Heart left ventricle (tissue), 16 donors: ENCODE measurements at regions of chr11 and their contacts with region 1.

Region 1: GRCh38 chr11:78350646-78351165 is 66.9 kb downstream of the GAB2 start:
- DNase-seq: peak in 4 of 5 donors; percentile 35 to 70 (median 45)
- ATAC-seq: peak; percentile 60 to 81 (median 73)
- H3K4me3 ChIP-seq: peak overlapping the region in 9 of 12 donors; percentile 15 to 43 (median 30)
- H3K27ac ChIP-seq: peak overlapping the region; percentile 64 to 96 (median 80)
- H3K4me1 ChIP-seq: peaks cover 0 to 94% (median 73%) of the 10 kb centered on the region in 12 donors
- H3K27me3 ChIP-seq: no peaks in the 10 kb centered on the region
- CTCF ChIP-seq: peak in 2 of 12 donors; percentile 24 to 26
- POLR2A ChIP-seq: no peak

Region 2: GRCh38 chr11:78112582-78113275 is 238.0 kb before region 1 on chr11:
- intact Hi-C with region 1: no loop called
- DNase-seq: no peak
- ATAC-seq: no peak
- H3K4me3 ChIP-seq: no peak overlapping the region
- H3K27ac ChIP-seq: no peak overlapping the region
- H3K4me1 ChIP-seq: no peaks in the 10 kb centered on the region
- H3K27me3 ChIP-seq: no peaks in the 10 kb centered on the region
- CTCF ChIP-seq: no peak
- POLR2A ChIP-seq: no peak

Region 3: GRCh38 chr11:78244546-78245255 is 106.0 kb before region 1 on chr11:
- intact Hi-C with region 1: loop called in 1 of 10 experiments (anchors 10 kb)
- DNase-seq: no peak
- ATAC-seq: peak in 2 of 4 donors; percentile 22 to 35
- H3K4me3 ChIP-seq: no peak overlapping the region
- H3K27ac ChIP-seq: peak overlapping the region in 8 of 12 donors; percentile 3 to 66 (median 28)
- H3K4me1 ChIP-seq: peaks cover 0 to 19% (median 6%) of the 10 kb centered on the region in 12 donors
- H3K27me3 ChIP-seq: no peaks in the 10 kb centered on the region
- CTCF ChIP-seq: no peak
- POLR2A ChIP-seq: no peak

Region 4: GRCh38 chr11:78310500-78310909 is 40.2 kb before region 1 on chr11:
- intact Hi-C with region 1: loop called in 1 of 10 experiments (anchors 5 kb)
- DNase-seq: peak; percentile 77 to 86 (median 83)
- ATAC-seq: peak; percentile 83 to 92 (median 89)
- H3K4me3 ChIP-seq: peak overlapping the region in 8 of 12 donors; percentile 0 to 30 (median 20)
- H3K27ac ChIP-seq: peak overlapping the region in 11 of 12 donors; percentile 23 to 81 (median 73)
- H3K4me1 ChIP-seq: peaks cover 0 to 72% (median 52%) of the 10 kb centered on the region in 12 donors
- H3K27me3 ChIP-seq: no peaks in the 10 kb centered on the region
- CTCF ChIP-seq: no peak
- POLR2A ChIP-seq: no peak